WTC11 (cell line): ENCODE measurements at regions of chr4 and their contacts with region 1.

Region 1: DNA sequence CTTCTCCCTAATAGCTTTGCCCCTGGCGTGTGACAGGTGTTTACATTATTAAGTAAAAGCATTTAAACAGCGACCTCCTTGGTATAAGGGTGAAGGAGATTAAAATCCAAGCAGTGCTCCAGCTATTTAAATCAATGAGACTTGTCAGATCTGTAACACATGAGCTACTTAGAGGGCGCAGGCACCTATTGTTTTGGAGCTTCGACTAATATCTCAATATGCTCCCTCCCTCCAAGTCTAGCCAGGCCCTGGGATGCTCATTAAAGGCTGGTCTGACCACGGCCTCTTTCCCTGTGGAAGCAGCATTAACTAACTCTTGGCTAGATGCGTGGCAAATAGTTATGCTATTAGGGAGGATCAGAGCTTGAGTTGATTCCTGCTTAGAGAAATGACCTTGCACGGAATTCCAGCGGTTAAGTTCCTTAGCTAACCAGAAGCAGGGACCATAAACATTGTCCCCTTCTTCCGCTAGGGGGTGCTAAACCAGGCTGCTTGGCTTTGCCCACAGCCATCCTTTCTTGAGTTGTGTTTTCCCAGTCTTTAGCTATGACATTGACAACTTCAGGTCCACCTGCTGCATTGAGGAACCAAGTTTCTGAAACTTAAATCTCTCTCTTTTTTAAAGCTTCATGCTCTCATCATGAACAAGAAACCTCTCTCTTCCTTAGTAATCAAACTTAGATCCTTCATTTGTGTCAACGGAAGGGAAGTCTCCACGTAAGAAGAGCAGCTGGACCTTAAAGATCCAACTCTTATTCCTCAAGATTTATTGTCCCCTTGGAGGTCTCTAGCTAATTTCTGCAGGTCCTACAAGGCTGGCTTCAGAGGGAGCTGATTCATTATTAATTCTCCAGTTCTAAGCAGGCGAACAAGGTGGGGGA is 80.7 kb upstream of the IGFBP7 start:
- DNase-seq: peak; percentile 78
- ATAC-seq: peak; percentile 38
- H3K4me3 Mint-ChIP-seq: no peak overlapping the region
- H3K27ac Mint-ChIP-seq: no peak overlapping the region
- H3K4me1 Mint-ChIP-seq: peaks cover 78% of the 10 kb centered on the region
- H3K27me3 Mint-ChIP-seq: peaks cover 20% of the 10 kb centered on the region
- CTCF ChIP-seq: peak; percentile 63

Region 2: DNA sequence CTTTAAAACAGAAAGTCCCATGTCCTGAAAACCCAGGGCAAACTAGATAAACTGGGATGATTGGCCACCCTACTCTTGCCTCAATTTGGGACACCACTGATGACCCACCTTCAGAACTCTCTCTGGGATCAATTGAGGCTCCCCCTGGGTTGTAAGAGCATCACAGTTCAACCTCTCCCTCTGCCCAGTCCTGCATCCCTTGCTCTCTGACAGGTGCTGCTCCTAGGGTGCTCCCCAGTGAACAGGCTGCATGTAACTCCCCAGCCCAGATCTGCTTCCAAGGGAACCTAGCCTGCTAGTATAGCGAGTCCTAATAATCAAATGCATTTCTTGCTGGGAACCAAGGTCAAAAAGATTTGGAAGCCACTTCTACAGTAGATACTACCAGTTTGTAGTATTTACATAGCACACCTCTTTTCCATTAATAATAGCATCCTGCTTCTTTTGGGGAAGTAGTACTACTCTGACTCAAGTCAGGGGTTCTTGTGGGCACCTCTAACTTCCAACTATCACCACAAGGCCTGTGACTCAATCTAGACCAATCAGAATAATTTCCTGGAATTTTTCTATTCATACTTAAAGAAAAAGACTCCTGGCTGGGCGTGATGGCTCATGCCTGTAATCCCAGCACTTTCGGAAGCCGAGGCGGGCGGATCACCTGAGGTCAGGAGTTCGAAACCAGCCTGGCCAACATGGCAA is 327.3 kb before region 1 on chr4:
- CTCF ChIA-PET with region 1: no interaction called
- POLR2A ChIA-PET with region 1: no interaction called
- DNase-seq: no peak
- ATAC-seq: no peak
- H3K4me3 Mint-ChIP-seq: no peak overlapping the region
- H3K27ac Mint-ChIP-seq: no peak overlapping the region
- H3K4me1 Mint-ChIP-seq: peaks cover 7% of the 10 kb centered on the region
- H3K27me3 Mint-ChIP-seq: peaks cover 9% of the 10 kb centered on the region
- CTCF ChIP-seq: no peak

Region 3: GRCh38 chr4:56907489-56908205 is 283.2 kb before region 1 on chr4 and contains the start of gene REST:
- CTCF ChIA-PET with region 1: interaction called, 11 read pairs
- POLR2A ChIA-PET with region 1: no interaction called
- DNase-seq: peak; percentile 91
- ATAC-seq: peak; percentile 79
- H3K4me3 Mint-ChIP-seq: peak within 1 kb of the TSS; percentile 77
- H3K27ac Mint-ChIP-seq: peak within 1 kb of the TSS; percentile 93
- H3K4me1 Mint-ChIP-seq: peaks cover 56% of the 10 kb centered on the region
- H3K27me3 Mint-ChIP-seq: peaks cover 31% of the 10 kb centered on the region
- CTCF ChIP-seq: no peak
- total RNA-seq, gene REST: 73.9 to 76.4 TPM (median 75.1 TPM) in 3 replicates

Region 4: DNA sequence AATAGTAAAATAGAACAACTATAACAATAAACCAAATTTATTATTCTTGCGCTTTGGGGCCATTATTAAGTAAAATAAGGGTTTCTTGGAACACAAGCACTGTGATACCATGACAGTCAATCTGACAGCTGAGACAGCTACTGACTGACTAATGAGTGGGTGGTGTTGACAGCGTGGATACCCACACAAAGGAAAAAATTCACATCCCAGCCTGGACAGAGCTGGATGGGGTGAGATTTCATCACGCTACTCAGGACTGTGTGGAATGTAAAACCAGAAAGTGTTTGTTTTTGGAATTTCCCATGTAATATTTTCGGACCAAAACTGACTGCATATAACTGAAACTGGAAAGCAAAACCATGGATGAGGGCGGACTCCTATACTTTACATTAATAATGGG is 129.4 kb before region 1 on chr4:
- CTCF ChIA-PET with region 1: no interaction called
- POLR2A ChIA-PET with region 1: no interaction called
- DNase-seq: no peak
- ATAC-seq: no peak
- H3K4me3 Mint-ChIP-seq: no peak overlapping the region
- H3K27ac Mint-ChIP-seq: no peak overlapping the region
- H3K4me1 Mint-ChIP-seq: peaks cover 1% of the 10 kb centered on the region
- H3K27me3 Mint-ChIP-seq: no peaks in the 10 kb centered on the region
- CTCF ChIP-seq: no peak

Region 5: GRCh38 chr4:57163530-57164459 is 27.0 kb before region 1 on chr4:
- CTCF ChIA-PET with region 1: interaction called, 93 read pairs
- POLR2A ChIA-PET with region 1: no interaction called
- DNase-seq: peak; percentile 88
- ATAC-seq: peak; percentile 90
- H3K4me3 Mint-ChIP-seq: peak overlapping the region; percentile 75
- H3K27ac Mint-ChIP-seq: no peak overlapping the region
- H3K4me1 Mint-ChIP-seq: peaks cover 29% of the 10 kb centered on the region
- H3K27me3 Mint-ChIP-seq: peaks cover 33% of the 10 kb centered on the region
- CTCF ChIP-seq: peak; percentile 90

Region 6: DNA sequence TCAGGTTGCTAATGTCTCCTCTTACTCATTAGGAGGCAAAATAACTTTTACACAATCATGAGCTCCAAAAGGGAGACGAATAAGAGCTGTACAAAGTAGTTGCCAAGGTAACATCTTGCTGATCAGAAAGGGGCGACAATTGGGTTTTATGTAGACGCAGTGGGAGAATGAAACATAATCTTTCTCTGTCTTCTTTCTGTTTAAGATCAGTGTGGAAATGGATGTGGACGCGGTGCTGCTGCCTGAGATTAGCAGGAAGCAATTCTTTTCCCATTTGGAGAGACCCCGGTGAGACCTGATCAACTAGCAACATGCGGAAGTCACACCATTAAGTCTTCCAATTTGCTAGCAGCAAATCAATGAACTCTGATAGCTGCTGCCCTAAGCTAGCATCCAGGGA is 10.1 kb after region 1 on chr4:
- CTCF ChIA-PET with region 1: interaction called, 35 read pairs
- POLR2A ChIA-PET with region 1: no interaction called
- DNase-seq: no peak
- ATAC-seq: no peak
- H3K4me3 Mint-ChIP-seq: no peak overlapping the region
- H3K27ac Mint-ChIP-seq: no peak overlapping the region
- H3K4me1 Mint-ChIP-seq: peaks cover 23% of the 10 kb centered on the region
- H3K27me3 Mint-ChIP-seq: peaks cover 3% of the 10 kb centered on the region; the same call in 1 of the 2 replicates
- CTCF ChIP-seq: no peak

Region 7: DNA sequence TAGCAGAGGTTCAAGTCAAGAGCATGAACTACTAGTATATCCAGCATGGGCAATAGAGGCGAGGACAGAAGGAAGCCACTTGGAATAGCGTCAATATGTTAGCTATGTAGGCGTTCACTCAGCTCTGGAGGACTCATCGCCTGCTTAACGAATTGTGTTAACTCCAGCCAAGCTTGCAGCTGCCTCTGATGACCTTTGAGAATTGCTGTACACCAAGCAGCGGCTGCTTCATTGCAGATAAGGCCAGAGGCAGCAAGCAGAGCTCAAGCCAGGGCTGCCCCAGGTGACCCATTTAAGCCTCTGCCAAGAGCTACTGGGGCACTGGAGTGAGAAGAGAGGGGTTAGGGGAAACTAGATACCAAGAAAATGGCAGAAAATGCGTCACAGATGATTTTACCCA is 79.5 kb after region 1 on chr4:
- CTCF ChIA-PET with region 1: interaction called, 14 read pairs
- POLR2A ChIA-PET with region 1: no interaction called
- DNase-seq: no peak
- ATAC-seq: no peak
- H3K4me3 Mint-ChIP-seq: no peak overlapping the region
- H3K27ac Mint-ChIP-seq: no peak overlapping the region; the same call in 1 of the 2 replicates
- H3K4me1 Mint-ChIP-seq: peaks cover 26% of the 10 kb centered on the region
- H3K27me3 Mint-ChIP-seq: peaks cover 8% of the 10 kb centered on the region
- CTCF ChIP-seq: no peak

Region 8: GRCh38 chr4:57287687-57288604 is 97.1 kb after region 1 on chr4:
- CTCF ChIA-PET with region 1: interaction called, 11 read pairs
- POLR2A ChIA-PET with region 1: no interaction called
- DNase-seq: no peak
- ATAC-seq: peak; percentile 67
- H3K4me3 Mint-ChIP-seq: peak overlapping the region; percentile 37
- H3K27ac Mint-ChIP-seq: no peak overlapping the region
- H3K4me1 Mint-ChIP-seq: peaks cover 44% of the 10 kb centered on the region
- H3K27me3 Mint-ChIP-seq: peaks cover 39% of the 10 kb centered on the region
- CTCF ChIP-seq: no peak

Region 9: DNA sequence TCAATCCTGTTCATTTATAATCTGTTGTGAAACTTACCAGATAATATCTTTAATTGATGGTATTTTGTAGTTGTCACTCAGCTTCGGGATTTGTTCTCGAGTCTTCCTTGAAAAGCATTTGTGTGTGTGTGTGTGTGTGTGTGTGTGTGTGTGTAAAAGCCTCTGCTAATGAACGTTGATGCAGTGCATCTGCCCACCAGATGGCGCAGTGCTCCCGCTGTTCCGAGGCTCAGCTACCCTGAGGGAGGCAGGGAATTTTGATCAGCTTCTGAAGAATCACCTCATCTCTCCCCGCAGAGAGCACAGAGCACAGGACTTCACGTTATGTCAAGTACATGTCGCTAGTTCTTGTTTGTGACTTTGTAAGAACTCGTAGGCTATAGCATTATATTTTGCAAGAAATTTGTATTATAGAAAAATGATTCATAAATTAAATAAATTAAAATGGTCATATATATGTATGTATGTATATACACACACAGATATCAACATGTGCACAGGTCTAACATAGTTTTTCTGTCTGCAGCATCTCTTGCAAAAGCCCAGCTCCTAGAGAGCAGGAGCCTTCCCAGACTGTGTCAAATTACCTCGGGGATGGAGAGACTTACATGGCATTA is 236.0 kb after region 1 on chr4:
- CTCF ChIA-PET with region 1: interaction called, 17 read pairs
- POLR2A ChIA-PET with region 1: no interaction called
- DNase-seq: peak; percentile 81
- ATAC-seq: peak; percentile 94
- H3K4me3 Mint-ChIP-seq: no peak overlapping the region
- H3K27ac Mint-ChIP-seq: no peak overlapping the region
- H3K4me1 Mint-ChIP-seq: peaks cover 4% of the 10 kb centered on the region; the same call in 1 of the 2 replicates
- H3K27me3 Mint-ChIP-seq: peaks cover 4% of the 10 kb centered on the region; the same call in 1 of the 2 replicates
- CTCF ChIP-seq: no peak; the same call in 1 of the 2 replicates